ENCODE measurements at regions of chr13 and their contacts with region 1.

Region 1: DNA sequence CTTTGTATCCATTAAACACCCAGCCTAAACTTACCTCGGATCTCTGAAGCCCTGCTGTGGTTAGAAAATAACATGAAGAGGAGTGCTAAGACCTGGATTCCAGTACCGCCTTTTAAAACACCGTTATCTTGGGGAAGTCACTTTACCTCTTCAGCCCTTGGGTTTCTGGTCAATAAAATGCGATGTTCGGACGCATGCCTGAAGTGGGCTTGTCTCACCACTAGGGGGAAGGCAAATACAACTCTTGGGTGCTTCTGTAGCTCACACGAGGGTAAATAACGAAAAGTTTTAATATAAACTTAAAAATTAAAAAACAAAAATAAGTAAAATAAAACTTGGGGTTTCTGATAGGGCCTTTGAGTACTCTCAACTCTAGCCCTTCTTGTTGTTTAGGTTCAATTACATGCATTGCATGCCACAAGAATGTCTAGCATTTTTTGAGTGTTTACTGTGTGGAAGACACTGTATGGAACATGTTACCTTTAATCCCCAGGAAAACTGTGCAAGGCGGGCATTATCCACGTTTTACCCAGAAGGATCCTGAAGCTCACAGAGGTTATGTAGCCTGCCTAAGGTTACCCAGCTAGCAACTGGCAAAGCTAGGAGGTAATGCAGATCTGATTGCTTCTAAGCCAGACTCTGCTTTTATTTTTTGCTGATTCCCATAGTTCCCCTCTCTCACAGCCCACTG is 240.4 kb downstream of the LMO7 start:
- DNase-seq: peak; percentile 71
- ATAC-seq: peak; percentile 90
- H3K4me3 Mint-ChIP-seq: no peak overlapping the region
- H3K27ac Mint-ChIP-seq: no peak overlapping the region
- H3K4me1 Mint-ChIP-seq: peaks cover 13% of the 10 kb centered on the region
- H3K27me3 Mint-ChIP-seq: peaks cover 3% of the 10 kb centered on the region

Region 2: GRCh38 chr13:75600371-75600770 is 276.1 kb before region 1 on chr13:
- CTCF ChIA-PET with region 1: no interaction called
- POLR2A ChIA-PET with region 1: no interaction called
- intact Hi-C with region 1: no loop called
- DNase-seq: no peak
- ATAC-seq: no peak
- H3K4me3 Mint-ChIP-seq: no peak overlapping the region
- H3K27ac Mint-ChIP-seq: no peak overlapping the region
- H3K4me1 Mint-ChIP-seq: no peaks in the 10 kb centered on the region
- H3K27me3 Mint-ChIP-seq: no peaks in the 10 kb centered on the region

Region 3: DNA sequence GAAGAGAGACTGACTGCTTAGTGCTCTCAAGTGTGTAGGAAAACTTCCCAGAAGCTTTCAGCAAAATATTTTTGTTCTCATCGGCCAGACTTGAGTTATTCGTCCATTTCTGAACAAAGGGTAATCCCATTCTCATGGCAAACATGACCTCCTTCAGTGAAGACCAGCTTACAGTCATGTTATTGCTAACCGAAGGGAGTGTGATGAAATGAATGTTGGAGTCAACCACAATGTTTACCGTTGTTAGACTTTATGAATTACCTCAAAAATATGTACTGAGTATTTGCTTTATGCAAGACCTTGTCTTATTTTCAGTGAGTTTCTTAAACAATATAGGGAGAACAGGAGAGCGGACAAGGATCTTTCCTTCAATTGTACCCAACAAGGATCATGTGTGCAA is 11.8 kb before region 1 on chr13:
- CTCF ChIA-PET with region 1: interaction called, 14 read pairs
- POLR2A ChIA-PET with region 1: no interaction called
- intact Hi-C with region 1: no loop called
- DNase-seq: no peak
- ATAC-seq: no peak
- H3K4me3 Mint-ChIP-seq: no peak overlapping the region
- H3K27ac Mint-ChIP-seq: no peak overlapping the region
- H3K4me1 Mint-ChIP-seq: peaks cover 2% of the 10 kb centered on the region
- H3K27me3 Mint-ChIP-seq: peaks cover 5% of the 10 kb centered on the region

Region 4: DNA sequence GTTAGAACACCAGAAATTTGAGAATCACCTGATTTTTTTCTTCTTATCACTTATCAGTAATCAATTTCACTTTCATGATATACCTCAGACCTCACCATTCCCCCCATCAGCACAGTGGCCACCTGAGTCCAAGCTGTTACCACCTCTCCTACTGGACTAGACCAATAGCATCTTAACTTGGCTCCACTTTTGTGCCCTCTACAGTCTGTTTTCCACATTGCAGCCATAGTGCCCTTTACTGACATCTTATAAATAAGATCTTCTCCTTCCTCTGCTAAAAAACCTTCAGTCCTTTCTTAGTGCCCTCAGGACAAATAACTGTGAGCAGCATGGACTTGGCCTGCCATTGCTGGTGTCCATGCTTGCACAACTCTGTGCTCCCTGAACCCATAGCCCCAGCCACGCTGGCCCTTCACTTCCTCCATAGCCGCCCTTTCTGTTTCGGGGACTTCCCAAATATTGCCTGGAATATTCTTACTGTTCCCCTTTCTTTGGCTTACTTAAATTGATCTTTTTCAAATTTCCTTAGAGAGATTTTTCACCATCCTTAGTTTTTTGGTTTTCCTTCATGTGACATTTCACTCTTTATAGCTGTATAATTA is 140.4 kb after region 1 on chr13:
- CTCF ChIA-PET with region 1: interaction called, 8 read pairs
- POLR2A ChIA-PET with region 1: no interaction called
- intact Hi-C with region 1: loop called (anchors 1 kb)
- DNase-seq: peak; percentile 42
- ATAC-seq: peak; percentile 64
- H3K4me3 Mint-ChIP-seq: no peak overlapping the region
- H3K27ac Mint-ChIP-seq: no peak overlapping the region
- H3K4me1 Mint-ChIP-seq: no peaks in the 10 kb centered on the region
- H3K27me3 Mint-ChIP-seq: no peaks in the 10 kb centered on the region

Region 5: DNA sequence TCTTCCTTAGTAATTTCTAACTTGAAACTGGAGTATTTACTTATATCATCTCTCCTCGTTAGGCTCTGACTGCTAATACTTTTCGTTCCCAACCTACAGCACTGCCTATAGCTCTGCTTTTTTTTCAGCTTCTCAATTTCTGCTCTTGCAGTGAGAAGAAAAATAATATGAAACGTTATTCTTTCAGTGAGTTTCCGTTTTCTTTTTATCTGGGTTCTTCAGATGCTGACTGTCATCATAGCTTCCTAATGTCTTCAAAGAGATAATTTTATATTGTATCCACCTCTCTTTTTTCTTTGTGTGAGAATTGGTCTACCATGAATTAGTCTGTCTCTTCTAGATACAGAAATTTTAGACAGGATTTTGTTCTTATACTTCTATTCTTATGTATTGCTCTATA is 214.6 kb after region 1 on chr13:
- CTCF ChIA-PET with region 1: no interaction called
- POLR2A ChIA-PET with region 1: no interaction called
- intact Hi-C with region 1: no loop called
- DNase-seq: no peak
- ATAC-seq: no peak
- H3K4me3 Mint-ChIP-seq: no peak overlapping the region
- H3K27ac Mint-ChIP-seq: no peak overlapping the region
- H3K4me1 Mint-ChIP-seq: no peaks in the 10 kb centered on the region
- H3K27me3 Mint-ChIP-seq: peaks cover 7% of the 10 kb centered on the region

Measured in activated CD4-positive, alpha-beta T cell treated with anti-CD3 and anti-CD28 coated beads for 36 hours (primary cell).